ENCODE measurements at regions of chr4 and their contacts with region 1.

Region 1: GRCh38 chr4:71713611-71714203 is 70.2 kb downstream of the GC start:
- DNase-seq: peak; percentile 47

Region 2: GRCh38 chr4:70601422-70602039 is 1112.2 kb before region 1 on chr4:
- in situ Hi-C with region 1: loop called (anchors 25 kb)
- DNase-seq: peak; percentile 68

Region 3: DNA sequence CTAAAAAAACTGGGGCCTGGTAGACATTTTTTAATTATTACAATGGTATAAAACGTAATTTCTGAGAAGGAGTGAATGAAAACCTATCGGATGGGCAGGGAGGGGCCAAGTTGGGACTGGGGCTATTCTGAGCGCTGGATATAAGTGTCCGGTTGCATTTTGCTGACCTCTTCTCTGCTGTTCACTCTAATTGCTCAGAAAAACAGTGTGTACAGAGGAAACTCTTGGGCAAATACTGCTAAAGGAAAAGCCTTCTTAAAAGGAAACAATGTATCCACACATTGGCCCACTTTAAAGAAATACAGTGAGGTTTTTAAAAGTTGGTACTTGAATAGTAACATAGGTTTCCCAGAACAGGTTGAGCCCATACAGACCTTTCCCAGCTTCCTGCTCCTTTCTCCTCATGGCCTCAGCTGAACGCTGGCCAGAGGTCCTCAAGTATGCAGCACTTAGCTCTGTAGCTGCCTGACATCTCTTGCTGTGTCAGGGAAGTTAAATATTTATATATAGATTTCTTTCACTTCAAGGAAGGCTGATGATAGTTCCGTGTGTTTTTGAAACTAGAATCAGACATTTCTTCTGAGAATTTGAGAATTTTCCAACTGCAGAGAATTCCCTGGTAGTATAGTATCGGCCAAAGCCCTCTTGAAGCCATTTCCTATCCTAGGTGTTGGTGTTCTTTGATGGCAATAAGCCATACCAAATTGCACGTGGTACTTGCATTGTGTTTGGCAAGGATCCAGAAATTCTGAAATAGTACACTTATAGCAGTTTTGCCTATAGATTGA is 472.0 kb before region 1 on chr4:
- in situ Hi-C with region 1: no loop called
- DNase-seq: no peak

Region 4: GRCh38 chr4:71537551-71538065 is 176.1 kb before region 1 on chr4:
- in situ Hi-C with region 1: no loop called
- DNase-seq: no peak